ENCODE measurements at regions of chr2 and their contacts with region 1.

Region 1: GRCh38 chr2:64750817-64751285 is 97.1 kb upstream of the SERTAD2 start:
- DNase-seq: peak; percentile 99 to 100
- H3K4me3 ChIP-seq: peak overlapping the region; percentile 87 to 90
- H3K27ac ChIP-seq: peak overlapping the region; percentile 96 to 98
- H3K4me1 ChIP-seq: peaks cover 0 to 18% of the 10 kb centered on the region in 2 donors
- H3K27me3 ChIP-seq: no peaks in the 10 kb centered on the region
- CTCF ChIP-seq: no peak

Region 2: DNA sequence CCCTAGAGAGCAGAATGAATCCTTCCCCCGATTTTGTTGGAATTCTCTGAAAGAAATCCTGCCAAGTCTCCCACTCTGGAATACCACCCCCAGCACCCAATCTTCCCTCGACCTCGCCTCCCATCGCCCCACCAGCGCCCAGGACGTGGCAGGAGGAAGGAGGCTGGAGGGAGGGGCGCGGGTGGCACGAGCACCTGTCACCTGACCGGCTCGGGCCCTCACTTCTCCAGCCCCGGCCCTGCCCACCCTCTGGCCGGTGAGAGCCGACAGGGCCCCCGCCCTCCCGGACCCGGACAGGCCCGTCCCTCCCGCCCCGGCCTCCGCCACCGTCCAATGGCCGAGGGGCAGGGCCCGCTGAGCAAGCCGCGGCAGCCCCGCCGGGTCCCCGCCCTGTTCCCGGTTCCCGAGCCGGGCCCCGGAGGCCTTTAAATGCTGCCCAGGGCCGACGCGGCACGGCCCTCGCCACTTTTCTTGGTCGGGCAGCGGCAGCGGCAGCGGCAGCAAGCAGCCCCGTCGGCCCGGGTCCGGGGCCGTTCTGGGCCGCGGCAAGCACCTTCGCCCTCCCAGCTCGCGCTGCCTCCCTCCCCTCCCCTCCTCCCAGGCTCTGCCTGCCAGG is 297.0 kb before region 1 on chr2 and contains the start of gene LGALSL:
- intact Hi-C with region 1: loop called (anchors 10 kb)
- DNase-seq: peak; percentile 50 to 90
- H3K4me3 ChIP-seq: peak within 1 kb of the TSS; percentile 76 to 93
- H3K27ac ChIP-seq: peak within 1 kb of the TSS; percentile 98 to 99
- H3K4me1 ChIP-seq: peaks cover 5% of the 10 kb centered on the region in 2 donors
- H3K27me3 ChIP-seq: no peaks in the 10 kb centered on the region
- CTCF ChIP-seq: no peak
- total RNA-seq, gene LGALSL: 35.4 TPM

Region 3: DNA sequence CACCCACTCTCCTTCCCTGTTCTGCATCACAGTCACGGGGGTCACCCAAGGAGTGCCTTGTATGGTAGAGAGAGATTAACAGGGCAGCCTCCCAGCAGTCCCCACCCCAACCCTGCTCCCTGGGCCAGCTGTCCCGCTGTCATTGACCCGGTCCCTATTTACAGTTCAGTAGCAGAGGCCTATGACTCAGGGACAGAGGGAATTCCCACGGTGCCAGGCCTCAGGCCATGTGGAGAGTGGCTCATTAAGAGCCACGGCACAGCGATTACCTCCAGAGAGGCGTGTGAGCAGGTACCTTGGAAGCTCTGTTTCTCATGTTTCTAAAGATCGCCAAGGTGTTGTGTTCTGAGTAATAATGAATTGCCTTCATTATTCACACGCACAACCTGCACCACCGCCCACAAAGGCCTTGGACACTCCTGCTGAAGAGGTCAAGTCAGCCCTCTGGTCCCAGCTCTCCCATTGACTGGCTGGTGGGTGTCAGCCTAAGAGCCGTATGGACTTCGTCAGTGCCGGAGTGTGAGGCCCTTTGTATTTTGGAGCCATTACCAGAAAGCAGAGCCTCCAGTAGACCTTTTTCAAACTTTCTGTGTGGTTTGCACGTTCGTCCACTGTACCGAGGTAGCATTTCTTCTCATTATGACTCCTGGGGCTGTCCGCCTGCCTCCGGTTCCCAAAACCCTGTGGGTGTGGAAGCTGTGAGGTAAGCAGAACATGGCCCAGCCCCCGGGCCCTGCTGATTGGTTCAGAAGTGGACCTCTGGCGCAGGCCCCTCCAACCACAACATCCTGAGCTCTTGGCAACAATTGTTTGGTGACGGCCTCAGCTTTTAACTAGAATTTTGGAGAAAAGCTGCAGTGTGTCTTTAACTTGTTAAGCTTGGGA is 144.1 kb before region 1 on chr2:
- intact Hi-C with region 1: loop called (anchors 2 kb)
- DNase-seq: peak; percentile 90 to 95
- H3K4me3 ChIP-seq: peak overlapping the region in 1 of 2 donors; percentile 50
- H3K27ac ChIP-seq: peak overlapping the region in 1 of 2 donors; percentile 74
- H3K4me1 ChIP-seq: peaks cover 6 to 15% of the 10 kb centered on the region in 2 donors
- H3K27me3 ChIP-seq: no peaks in the 10 kb centered on the region
- CTCF ChIP-seq: no peak

Region 4: GRCh38 chr2:64698668-64699444 is 52.0 kb before region 1 on chr2:
- intact Hi-C with region 1: loop called (anchors 5 kb)
- DNase-seq: no peak
- H3K4me3 ChIP-seq: no peak overlapping the region
- H3K27ac ChIP-seq: no peak overlapping the region
- H3K4me1 ChIP-seq: peaks cover 0 to 6% of the 10 kb centered on the region in 2 donors
- H3K27me3 ChIP-seq: no peaks in the 10 kb centered on the region
- CTCF ChIP-seq: no peak

Region 5: DNA sequence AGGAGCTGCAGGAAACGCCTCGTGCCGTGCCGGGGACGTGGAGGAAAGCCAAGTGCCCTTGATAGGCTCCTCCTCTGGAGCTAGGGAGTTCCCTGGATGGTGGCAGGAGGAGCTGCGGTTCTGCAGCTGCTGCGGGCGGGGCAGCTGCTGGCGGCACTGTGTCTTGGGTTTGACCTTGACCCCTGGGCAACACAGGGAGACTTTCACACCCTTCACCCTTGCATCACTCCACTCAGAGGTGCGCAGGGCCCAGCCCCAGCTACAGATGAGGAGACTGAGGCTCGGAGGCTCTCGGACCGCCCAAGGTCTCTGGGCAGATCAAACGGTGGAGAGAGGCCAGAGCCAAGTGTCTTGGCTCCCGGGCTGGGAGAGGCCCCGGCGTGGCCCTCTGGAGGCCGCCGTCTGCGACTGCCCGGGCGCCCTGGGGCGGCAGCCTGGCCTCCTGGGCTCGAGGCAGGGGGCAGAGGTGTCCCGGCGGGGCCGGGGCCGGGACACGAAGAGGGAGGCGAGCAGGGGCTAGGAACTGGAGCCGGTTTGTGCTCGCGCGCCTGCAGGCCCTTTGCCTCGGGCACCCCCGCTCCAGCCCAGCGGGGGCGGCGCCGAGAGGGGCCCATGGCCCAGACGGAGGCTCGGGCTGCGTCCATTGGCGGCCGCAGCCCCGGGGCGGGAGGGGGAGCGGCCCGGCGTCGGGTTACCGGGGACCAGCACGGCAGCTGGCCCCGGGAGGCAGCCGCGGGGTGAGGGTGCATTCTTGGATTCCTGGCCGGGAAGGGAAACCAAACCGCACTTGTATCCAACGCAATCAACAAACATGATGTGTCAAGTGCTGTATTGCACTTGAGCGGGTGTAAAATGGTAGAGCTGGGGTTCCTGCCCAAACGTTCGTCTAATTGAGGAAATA is 108.7 kb after region 1 on chr2:
- intact Hi-C with region 1: loop called (anchors 1 kb)
- DNase-seq: peak; percentile 59 to 93
- H3K4me3 ChIP-seq: peak overlapping the region; percentile 50 to 74
- H3K27ac ChIP-seq: peak overlapping the region; percentile 93 to 94
- H3K4me1 ChIP-seq: peaks cover 15 to 33% of the 10 kb centered on the region in 2 donors
- H3K27me3 ChIP-seq: no peaks in the 10 kb centered on the region
- CTCF ChIP-seq: no peak

Region 6: DNA sequence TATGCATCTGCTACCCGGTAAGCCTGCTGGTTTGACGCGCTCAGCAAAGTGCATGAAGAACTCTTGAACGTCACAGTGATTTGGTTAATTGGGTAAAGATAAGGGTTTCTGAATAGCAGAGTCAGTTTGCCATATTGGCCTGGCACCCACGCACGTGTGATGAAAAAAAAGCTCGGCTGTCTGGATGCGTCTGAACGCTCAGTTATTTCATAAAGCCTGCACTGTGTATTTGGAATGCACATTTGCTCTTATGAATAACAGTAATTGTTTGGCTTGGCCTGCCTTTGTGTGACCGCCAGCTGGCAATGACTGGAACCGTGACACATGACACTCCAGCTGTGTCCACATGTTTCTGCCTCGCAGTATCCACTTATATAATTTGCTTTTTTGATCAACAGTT is 1554.9 kb after region 1 on chr2:
- intact Hi-C with region 1: no loop called
- DNase-seq: peak in 1 of 2 donors; percentile 71
- H3K4me3 ChIP-seq: no peak overlapping the region
- H3K27ac ChIP-seq: no peak overlapping the region
- H3K4me1 ChIP-seq: peaks cover 0 to 5% of the 10 kb centered on the region in 2 donors
- H3K27me3 ChIP-seq: no peaks in the 10 kb centered on the region
- CTCF ChIP-seq: no peak